Aorta (tissue), 5 donors: ENCODE measurements at regions of chr1 and their contacts with region 1.

Region 1: GRCh38 chr1:237012788-237013383 is 8.6 kb upstream of the MT1HL1 start:
- DNase-seq: peak; percentile 94 to 97
- ATAC-seq: peak; percentile 87
- H3K4me3 ChIP-seq: no peak overlapping the region
- H3K27ac ChIP-seq: peak overlapping the region; percentile 50 to 97
- H3K4me1 ChIP-seq: peaks cover 4 to 17% of the 10 kb centered on the region in 2 donors
- H3K27me3 ChIP-seq: no peaks in the 10 kb centered on the region

Region 2: DNA sequence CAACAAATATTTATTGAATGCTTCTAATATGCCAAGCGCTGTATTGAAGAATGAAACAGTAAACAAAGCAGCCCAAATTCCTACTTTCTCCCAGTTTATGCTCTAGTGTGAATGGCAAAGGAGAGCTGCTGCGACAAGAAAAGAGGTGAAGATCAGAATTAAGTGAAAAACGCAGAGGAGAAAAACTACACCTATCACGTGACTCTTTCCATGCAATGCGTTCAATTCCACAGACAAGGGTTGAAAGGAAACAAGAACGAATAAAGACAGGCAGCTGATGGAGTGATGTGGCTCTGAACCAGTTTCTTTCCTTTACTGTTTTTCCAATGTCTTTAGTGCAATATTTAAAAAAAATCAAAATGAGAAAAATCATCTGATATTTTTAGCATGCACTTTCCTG is 32.2 kb before region 1 on chr1:
- intact Hi-C with region 1: loop called in 1 of 2 experiments (anchors 2 kb)
- DNase-seq: no peak
- ATAC-seq: peak; percentile 35
- H3K4me3 ChIP-seq: no peak overlapping the region
- H3K27ac ChIP-seq: no peak overlapping the region
- H3K4me1 ChIP-seq: no peaks in the 10 kb centered on the region
- H3K27me3 ChIP-seq: no peaks in the 10 kb centered on the region

Region 3: GRCh38 chr1:237031480-237031879 is 18.6 kb after region 1 on chr1:
- intact Hi-C with region 1: loop called in 1 of 2 experiments (anchors 2 kb)
- DNase-seq: no peak
- ATAC-seq: peak; percentile 87
- H3K4me3 ChIP-seq: peak overlapping the region in 1 of 2 donors; percentile 4
- H3K27ac ChIP-seq: peak overlapping the region; percentile 57 to 89
- H3K4me1 ChIP-seq: peaks cover 4 to 9% of the 10 kb centered on the region in 2 donors
- H3K27me3 ChIP-seq: no peaks in the 10 kb centered on the region